GM10248 (cell line): ENCODE measurements at regions of chr15 and their contacts with region 1.

Region 1: GRCh38 chr15:42401544-42402454 is 42.5 kb downstream of the CAPN3 start:
- DNase-seq: peak; percentile 56
- CTCF ChIP-seq: no peak

Region 2: DNA sequence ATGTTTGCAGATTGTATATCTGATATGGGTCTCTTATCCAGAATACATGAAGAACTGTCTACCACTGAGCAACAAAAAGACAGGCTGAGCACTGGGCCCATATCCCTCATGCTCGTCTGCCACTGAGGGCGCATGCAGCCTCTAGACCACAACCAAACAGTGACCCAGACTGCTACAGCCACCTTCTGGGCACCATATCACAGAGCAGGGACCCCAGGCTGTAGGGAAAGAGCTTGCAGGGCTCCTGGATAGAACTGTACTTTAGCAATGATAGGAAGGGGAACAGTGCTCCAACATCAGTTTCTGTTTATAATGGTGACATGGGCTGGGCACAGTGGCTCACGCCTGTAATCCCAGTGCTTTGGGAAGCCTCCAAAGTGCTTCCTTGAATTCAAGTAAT is 88.3 kb before region 1 on chr15:
- CTCF ChIA-PET with region 1: no interaction called
- POLR2A ChIA-PET with region 1: no interaction called
- DNase-seq: no peak
- CTCF ChIP-seq: no peak

Region 3: GRCh38 chr15:42354824-42355223 is 47.0 kb before region 1 on chr15:
- CTCF ChIA-PET with region 1: no interaction called
- POLR2A ChIA-PET with region 1: interaction called, 11 read pairs
- DNase-seq: no peak
- CTCF ChIP-seq: no peak